ENCODE measurements at regions of chr11 and their contacts with region 1.

Region 1: DNA sequence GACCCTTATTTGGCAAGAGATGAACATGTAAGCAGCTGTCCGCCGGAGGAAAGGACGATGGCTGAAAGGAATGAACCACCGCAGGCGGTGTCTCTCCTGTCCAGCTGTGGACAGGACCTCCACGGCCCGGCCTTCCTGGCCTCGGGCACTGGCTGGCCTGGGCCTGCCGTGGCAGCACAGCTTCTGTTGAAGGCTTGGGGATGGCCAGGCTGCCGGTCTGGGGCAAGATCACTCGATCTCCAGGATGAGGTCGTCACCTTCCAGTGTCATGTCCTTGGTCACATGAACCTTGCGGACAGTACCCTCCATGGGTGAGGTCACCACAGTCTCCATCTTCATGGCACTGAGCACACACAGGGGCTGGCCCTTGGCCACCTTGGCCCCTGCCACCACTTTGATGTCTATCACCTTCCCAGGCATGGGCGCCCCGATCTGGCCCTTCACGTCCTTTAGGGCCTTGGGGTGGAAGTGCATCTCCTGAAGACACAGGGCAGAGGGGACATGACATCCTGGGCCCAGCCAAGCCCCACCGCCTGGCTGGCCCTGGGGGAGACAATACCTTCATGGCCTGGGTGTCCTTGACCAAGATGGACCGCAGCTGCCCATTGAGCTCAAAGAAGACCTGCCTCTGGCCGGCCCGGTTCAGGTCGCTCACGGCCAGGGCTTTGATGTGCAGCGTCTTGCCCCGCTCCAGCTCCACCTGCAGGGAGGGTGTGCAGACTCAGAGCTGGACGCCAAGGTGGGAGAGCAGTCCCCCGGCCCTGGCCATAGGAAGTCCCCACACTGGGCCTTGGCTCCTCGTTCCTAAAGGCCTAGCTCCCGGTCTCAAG is 5.6 kb downstream of the RCE1 start:
- DNase-seq: no peak
- ATAC-seq: no peak
- H3K4me3 ChIP-seq: no peak overlapping the region
- H3K27ac ChIP-seq: no peak overlapping the region
- H3K4me1 ChIP-seq: peaks cover 23% of the 10 kb centered on the region
- H3K27me3 ChIP-seq: no peaks in the 10 kb centered on the region
- CTCF ChIP-seq: no peak

Region 2: GRCh38 chr11:66734215-66734614 is 114.7 kb before region 1 on chr11:
- CTCF ChIA-PET with region 1: no interaction called
- POLR2A ChIA-PET with region 1: no interaction called
- in situ Hi-C with region 1: no loop called
- intact Hi-C with region 1: no loop called
- DNase-seq: no peak
- ATAC-seq: no peak
- H3K4me3 ChIP-seq: no peak overlapping the region
- H3K27ac ChIP-seq: no peak overlapping the region
- H3K4me1 ChIP-seq: no peaks in the 10 kb centered on the region
- H3K27me3 ChIP-seq: peaks cover 17% of the 10 kb centered on the region
- CTCF ChIP-seq: no peak

Region 3: DNA sequence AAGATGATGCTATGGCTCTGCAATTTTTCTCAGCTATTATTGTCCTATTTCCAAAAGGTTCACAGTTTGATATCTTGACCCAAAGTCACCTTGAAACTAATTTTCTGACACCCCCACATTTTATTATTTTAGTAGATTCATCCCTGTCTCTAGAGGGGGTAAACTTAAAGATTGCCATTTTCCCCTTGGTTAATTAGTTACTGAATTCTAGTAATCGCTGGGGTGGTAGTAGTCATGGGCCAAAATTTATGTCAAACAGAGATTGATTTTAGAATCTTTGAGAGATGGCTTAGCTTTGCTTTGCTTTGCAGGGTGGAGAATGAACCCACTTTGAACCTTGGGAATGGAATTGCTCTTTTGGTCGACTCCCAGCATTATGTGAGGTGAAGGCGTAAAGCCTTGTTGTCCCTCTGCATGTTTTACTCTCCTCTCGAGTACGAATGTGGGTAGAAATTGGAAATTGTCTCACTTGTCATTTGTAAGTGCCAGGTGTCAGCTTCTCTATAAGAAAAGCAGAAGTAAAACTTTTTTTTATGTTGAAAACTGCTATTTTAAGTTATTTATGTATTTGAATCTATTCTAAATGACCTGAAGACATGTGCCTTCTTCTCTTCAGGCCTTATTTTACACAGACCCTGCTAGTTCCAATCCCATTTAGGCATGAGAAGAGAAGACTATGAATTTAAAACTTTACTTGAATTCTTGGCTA is 48.0 kb before region 1 on chr11:
- CTCF ChIA-PET with region 1: no interaction called
- POLR2A ChIA-PET with region 1: no interaction called
- in situ Hi-C with region 1: no loop called
- intact Hi-C with region 1: no loop called
- DNase-seq: no peak
- ATAC-seq: no peak
- H3K4me3 ChIP-seq: no peak overlapping the region
- H3K27ac ChIP-seq: no peak overlapping the region
- H3K4me1 ChIP-seq: no peaks in the 10 kb centered on the region
- H3K27me3 ChIP-seq: no peaks in the 10 kb centered on the region
- CTCF ChIP-seq: no peak

Region 4: DNA sequence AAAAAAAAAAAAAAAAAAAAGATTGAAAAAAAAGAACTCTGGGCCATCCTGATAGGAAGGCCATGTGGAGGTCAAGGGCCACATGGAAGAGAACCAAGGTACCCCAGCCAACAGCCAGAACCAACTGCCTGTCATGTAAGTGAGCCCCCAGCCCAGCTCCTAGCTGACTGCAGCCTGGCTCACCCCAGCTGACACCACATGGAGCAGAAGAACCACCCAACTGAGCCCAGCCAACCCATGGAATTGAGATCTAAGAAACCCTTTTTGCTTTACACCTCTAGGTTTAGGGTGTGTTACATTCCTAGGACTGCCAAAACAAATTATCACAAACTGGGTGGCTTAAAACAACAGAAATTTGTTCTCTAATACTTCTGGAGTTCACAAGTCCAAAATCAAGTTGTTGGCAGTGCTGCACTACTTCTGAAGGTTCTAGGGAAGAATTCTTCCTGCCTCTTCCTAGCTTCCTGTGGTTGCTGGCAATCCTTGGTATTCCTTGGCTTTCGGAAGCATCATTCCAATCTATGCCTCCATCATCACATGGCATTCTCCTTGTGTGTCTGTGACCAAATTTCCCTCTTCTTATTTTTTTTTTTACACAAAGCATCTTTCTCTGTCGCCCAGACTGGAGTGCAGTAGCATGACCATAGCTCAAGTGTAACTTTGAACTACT is 130.6 kb after region 1 on chr11:
- CTCF ChIA-PET with region 1: no interaction called
- POLR2A ChIA-PET with region 1: interaction called, 10 read pairs
- in situ Hi-C with region 1: no loop called
- intact Hi-C with region 1: no loop called
- DNase-seq: no peak
- ATAC-seq: no peak
- H3K4me3 ChIP-seq: no peak overlapping the region
- H3K27ac ChIP-seq: no peak overlapping the region
- H3K4me1 ChIP-seq: peaks cover 13% of the 10 kb centered on the region
- H3K27me3 ChIP-seq: no peaks in the 10 kb centered on the region
- CTCF ChIP-seq: no peak

Measured in Panc1 (cell line).